ENCODE measurements at regions of chr3 and their contacts with region 1.

Region 1: DNA sequence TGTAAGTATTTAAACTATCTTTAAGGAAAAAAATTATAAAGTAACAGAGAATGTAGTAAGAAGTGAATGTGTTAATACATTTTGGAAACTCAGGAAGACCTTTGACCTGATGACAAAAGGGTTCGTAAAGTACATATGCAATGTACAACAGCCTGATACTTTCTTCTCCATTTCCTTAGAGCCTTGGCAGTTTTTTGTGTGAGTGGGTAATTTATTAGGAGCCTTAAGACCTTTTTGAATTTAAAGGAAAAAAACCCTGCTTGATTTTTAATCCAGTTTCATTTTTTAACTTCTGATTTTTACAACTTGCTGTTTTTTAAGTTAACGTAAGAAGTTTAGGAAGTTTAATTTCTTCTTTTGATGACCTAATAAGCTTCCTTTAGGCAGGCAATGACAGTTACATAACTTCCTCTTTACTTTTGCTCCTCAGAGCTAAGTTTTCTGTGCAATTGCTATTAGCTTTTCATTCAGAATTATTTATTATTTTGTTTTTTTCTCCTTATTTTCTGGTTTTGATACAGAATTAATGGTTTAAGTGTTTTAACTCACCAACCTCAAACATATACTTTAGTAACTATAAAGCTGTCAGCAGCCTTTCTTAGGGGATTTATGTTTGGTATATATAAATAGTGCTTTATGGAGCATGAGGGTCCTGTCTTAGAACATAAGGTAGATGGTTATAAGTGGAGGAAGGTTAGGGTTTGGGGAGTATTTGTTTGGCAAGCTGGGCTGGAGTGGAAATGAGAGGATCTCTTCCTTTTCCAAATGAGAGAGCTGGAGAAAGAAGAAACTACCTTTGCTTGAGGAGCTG is 35.2 kb downstream of the ARMC8 start:
- H3K4me3 Mint-ChIP-seq: peak overlapping the region; percentile 23
- H3K27ac Mint-ChIP-seq: no peak overlapping the region
- H3K4me1 Mint-ChIP-seq: peaks cover 43% of the 10 kb centered on the region
- H3K27me3 Mint-ChIP-seq: no peaks in the 10 kb centered on the region

Region 2: GRCh38 chr3:138174421-138175122 is 47.8 kb before region 1 on chr3 and contains the start of gene DBR1:
- intact Hi-C with region 1: loop called (anchors 5 kb)
- H3K4me3 Mint-ChIP-seq: peak within 1 kb of the TSS; percentile 89
- H3K27ac Mint-ChIP-seq: peak within 1 kb of the TSS; percentile 92
- H3K4me1 Mint-ChIP-seq: peaks cover 21% of the 10 kb centered on the region
- H3K27me3 Mint-ChIP-seq: peaks cover 5% of the 10 kb centered on the region